Sciatic nerve (tissue), 2 donors: ENCODE measurements at regions of chr12 and their contacts with region 1.

Region 1: DNA sequence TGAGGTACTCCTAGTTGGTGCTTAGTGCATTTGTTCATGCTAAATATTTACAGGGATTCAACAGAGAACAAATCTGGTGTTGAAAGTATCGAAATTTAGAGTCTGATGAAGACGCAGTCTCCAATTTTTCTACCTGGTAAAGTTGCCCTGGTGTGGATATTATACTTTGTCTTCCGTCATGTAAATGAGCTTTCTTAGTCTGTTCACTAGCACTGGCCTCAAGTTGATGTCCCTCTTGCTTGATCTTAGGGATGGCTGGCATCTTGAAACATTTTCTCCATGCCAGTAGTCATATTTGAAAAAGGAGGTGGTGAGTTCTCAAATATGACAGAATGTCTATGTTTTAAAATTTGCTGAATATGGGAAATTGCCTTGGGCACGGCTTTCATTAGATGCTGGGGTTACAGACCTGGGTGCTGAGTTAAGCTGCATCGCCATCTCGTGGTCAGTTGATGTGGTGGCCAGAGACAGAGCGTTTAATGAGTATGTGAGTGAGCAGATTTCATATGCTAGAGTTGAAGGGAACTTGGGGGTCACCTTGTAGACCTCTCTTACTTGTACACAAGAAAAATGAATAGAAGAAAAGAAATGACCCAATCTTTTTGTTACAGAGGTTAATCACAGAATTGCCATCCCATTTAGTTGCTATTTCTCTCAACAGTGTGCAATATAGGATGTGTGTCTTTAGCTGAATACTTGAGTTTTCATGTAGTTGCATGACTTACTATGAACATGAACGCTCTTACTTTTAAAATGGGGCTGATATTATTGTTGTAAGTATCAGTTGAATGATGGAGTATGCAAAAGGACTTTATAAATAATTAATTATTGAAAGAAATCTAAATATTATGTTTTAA is 172.8 kb upstream of the DCN start:
- DNase-seq: peak; percentile 83
- ATAC-seq: peak; percentile 96

Region 2: DNA sequence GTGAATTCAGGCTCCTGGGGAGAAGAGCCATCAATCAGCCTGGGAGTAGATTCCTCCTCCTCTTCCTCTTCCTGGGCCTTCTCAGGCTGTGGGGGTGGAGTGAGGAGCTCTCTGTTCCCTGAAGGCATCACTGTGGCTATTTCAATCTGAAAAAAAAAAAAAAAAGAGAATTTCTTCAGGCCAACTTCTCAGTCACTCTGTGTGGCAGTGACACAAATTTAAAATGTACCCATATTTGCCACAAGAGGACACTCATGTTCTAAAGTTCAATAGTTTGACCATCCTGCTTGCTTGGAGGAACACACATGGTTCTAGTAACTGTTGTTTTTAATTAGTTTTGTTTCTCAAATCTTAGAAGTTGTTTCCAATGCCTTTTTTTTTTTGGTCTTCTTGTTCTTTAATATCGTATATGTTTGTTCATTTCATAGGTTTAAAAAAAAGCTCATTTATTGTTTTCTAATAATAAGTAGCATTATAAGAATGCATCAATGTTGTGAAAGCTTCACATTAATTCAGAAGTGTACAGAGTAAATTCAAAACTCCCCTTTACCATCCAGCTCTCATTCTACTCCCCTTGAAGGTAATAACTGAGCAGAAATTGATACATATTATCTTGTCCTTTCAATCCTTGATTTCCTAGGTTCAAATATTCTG is 377.1 kb before region 1 on chr12:
- intact Hi-C with region 1: loop called (anchors 10 kb)
- DNase-seq: no peak
- ATAC-seq: peak; percentile 92